ENCODE measurements at regions of chr7 and their contacts with region 1.

Region 1: DNA sequence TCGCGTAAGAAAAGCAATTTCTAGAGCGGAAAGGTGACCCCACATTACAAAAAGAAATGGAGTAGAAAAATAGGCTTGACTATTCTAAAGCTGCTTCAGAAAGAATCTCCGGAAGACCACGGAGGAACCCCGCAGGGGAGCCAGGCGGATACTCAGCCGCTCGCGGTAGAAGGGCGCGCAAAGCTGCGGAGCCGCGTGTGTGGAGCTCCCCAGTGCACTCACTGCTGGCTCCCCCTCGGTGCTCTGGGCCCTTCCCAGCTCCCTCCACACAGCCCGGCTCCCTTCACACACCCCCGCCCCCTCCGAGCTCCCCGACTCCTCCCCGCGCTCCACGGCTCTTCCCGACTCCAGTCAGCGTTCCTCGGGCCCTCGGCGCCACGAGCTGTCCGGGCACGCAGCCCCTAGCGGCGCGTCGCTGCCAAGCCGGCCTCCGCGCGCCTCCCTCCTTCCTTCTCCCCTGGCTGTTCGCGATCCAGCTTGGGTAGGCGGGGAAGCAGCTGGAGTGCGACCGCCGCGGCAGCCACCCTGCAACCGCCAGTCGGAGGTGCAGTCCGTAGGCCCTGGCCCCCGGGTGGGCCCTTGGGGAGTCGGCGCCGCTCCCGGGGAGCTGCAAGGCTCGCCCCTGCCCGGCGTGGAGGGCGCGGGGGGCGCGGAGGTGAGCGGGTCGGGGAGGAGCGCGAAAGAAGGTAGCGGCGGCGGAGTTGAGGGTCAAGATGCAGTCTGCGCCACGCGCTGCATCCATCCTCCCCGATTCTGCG is at the start of gene STEAP2:
- DNase-seq: peak; percentile 81
- ATAC-seq: peak; percentile 98
- H3K4me3 ChIP-seq: peak within 1 kb of the TSS; percentile 65 to 87 (median 83)
- H3K27ac ChIP-seq: peak within 1 kb of the TSS; percentile 94
- H3K4me1 ChIP-seq: peaks cover 30% of the 10 kb centered on the region
- H3K27me3 ChIP-seq: peaks cover 0 to 5% of the 10 kb centered on the region in 2 experiments; a peak in 1 of 5 replicates
- CTCF ChIP-seq: peak; percentile 91
- EP300 ChIP-seq: peak in 1 of 2 experiments; percentile 41; a peak in 1 of 4 replicates
- POLR2A ChIP-seq: peak; percentile 80 to 86
- RAD21 ChIP-seq: peak; percentile 79
- total RNA-seq, gene STEAP2: 3.5 and 4.3 TPM in 2 replicates

Region 2: GRCh38 chr7:90165724-90166123 is 45.8 kb before region 1 on chr7:
- CTCF ChIA-PET with region 1: no interaction called
- POLR2A ChIA-PET with region 1: interaction called, 13 read pairs
- in situ Hi-C with region 1: no loop called
- intact Hi-C with region 1: no loop called
- DNase-seq: no peak
- ATAC-seq: no peak
- H3K4me3 ChIP-seq: no peak overlapping the region
- H3K27ac ChIP-seq: no peak overlapping the region
- H3K4me1 ChIP-seq: no peaks in the 10 kb centered on the region
- H3K27me3 ChIP-seq: no peaks in the 10 kb centered on the region
- CTCF ChIP-seq: no peak
- EP300 ChIP-seq: no peak
- POLR2A ChIP-seq: no peak
- RAD21 ChIP-seq: no peak

Region 3: GRCh38 chr7:90178679-90179278 is 32.8 kb before region 1 on chr7:
- CTCF ChIA-PET with region 1: no interaction called
- POLR2A ChIA-PET with region 1: interaction called, 65 read pairs
- in situ Hi-C with region 1: no loop called
- intact Hi-C with region 1: loop called (anchors 1 kb)
- DNase-seq: peak; percentile 41
- ATAC-seq: peak; percentile 79
- H3K4me3 ChIP-seq: peak overlapping the region in 1 of 3 experiments; percentile 9; a peak in 2 of 6 replicates
- H3K27ac ChIP-seq: peak overlapping the region; percentile 29
- H3K4me1 ChIP-seq: peaks cover 38% of the 10 kb centered on the region
- H3K27me3 ChIP-seq: no peaks in the 10 kb centered on the region
- CTCF ChIP-seq: no peak
- EP300 ChIP-seq: no peak; a peak in 1 of 4 replicates
- POLR2A ChIP-seq: no peak
- RAD21 ChIP-seq: no peak

Region 4: DNA sequence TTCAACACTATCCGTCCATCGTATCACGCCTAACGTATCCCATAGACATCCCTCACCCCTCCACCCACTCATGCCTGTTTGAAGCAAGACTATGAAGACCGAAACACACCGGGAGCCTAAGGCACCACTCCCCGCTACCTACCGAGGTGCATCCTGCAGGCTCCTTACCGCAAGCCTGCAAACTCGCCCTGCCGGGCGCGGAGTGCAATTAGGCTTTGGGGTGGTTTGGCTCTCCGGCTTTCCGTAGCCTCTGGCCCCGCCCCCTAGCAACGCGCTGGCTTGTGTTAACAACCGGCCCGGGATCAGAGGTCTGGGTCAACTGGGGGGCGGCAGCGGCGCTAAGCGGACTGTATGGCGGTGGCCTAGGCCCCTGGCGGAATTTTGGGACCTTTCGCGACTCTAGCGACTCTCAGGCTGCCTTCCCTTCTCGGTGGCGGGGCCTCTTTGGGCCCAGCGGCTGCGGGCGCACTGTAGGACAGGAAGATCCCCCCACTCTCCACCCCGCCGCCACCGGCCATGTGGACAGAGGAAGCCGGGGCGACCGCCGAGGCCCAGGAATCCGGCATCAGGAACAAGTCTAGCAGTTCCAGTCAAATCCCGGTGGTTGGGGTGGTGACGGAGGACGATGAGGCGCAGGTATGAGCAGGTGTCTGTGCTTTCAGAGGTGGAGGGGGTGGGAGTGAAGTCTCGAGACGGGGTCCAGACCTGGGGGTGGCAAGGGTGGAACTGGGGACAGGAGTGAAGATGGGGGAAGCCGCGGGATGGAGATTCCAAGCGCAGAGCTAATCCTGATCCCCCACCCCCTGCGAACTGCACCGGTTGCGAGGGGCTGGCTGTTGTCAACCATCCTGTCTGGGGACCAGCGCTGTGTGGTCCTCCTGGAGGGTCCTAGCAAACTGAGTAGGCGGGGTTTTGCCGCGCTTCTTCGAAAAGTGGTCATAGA is 33.6 kb after region 1 on chr7 and contains the start of gene CFAP69:
- CTCF ChIA-PET with region 1: no interaction called
- POLR2A ChIA-PET with region 1: interaction called, 8 read pairs
- in situ Hi-C with region 1: no loop called
- intact Hi-C with region 1: loop called (anchors 1 kb)
- DNase-seq: peak; percentile 78
- ATAC-seq: peak; percentile 90
- H3K4me3 ChIP-seq: peak within 1 kb of the TSS; percentile 61 to 91 (median 76)
- H3K27ac ChIP-seq: peak within 1 kb of the TSS; percentile 51
- H3K4me1 ChIP-seq: peaks cover 29% of the 10 kb centered on the region
- H3K27me3 ChIP-seq: no peaks in the 10 kb centered on the region
- CTCF ChIP-seq: peak; percentile 53; the same call in 1 of the 2 replicates
- EP300 ChIP-seq: peak; percentile 20 to 38; a peak in 2 of 4 replicates
- POLR2A ChIP-seq: peak; percentile 33 to 82; a peak in 2 of 4 replicates
- RAD21 ChIP-seq: peak; percentile 39; the same call in 1 of the 2 replicates
- total RNA-seq, gene CFAP69: 2.7 and 4.0 TPM in 2 replicates

Region 5: DNA sequence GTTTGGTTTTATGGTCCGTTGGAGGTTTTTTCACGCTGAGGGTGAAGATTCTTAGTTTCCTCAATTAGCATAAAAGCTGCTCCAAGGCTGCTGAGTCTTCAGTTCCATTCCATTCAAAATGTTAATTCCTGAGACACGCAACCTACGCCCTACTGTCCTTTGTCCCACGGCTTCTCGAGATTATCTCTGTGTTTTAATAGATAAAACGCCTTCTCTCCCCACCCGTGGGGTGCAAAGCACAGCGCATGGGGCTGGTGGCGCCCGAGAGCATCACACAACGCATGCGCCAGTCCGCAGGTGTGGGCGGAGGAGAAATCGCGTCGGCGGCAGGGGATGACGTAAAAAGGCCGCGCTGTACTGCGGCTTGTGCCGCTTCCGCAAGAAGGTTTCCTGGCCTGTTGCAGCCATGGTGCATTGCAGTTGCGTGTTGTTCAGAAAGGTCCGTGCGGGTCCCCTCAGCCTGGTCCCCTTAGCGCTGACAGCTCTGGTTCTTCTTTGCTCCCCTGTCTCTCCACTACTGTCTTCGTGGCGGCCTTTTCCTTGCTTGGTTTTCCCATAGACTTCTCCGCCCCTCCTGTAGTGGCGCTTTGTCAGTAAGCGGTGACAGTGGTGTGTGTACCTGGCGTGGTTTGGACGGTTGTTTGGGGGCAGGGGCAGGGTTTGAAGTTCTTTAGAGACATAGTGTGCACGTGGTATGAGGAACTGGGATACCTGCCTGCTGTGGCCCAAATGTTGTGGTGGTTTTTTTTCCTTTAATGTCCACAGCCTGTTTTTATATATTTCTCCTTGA is 135.0 kb after region 1 on chr7 and contains the start of gene GTPBP10:
- CTCF ChIA-PET with region 1: no interaction called
- POLR2A ChIA-PET with region 1: interaction called, 5 read pairs
- in situ Hi-C with region 1: no loop called
- intact Hi-C with region 1: loop called (anchors 2 kb)
- DNase-seq: peak; percentile 87
- ATAC-seq: peak; percentile 91
- H3K4me3 ChIP-seq: peak within 1 kb of the TSS; percentile 82 to 97 (median 89)
- H3K27ac ChIP-seq: peak within 1 kb of the TSS; percentile 97
- H3K4me1 ChIP-seq: peaks cover 33% of the 10 kb centered on the region
- H3K27me3 ChIP-seq: no peaks in the 10 kb centered on the region; a peak in 1 of 5 replicates
- CTCF ChIP-seq: peak; percentile 87
- EP300 ChIP-seq: 0 out of 4 replicates have a peak, but pooled peaks of 1 of the 2 experiments have one; percentile 8
- POLR2A ChIP-seq: peak; percentile 97 to 98
- RAD21 ChIP-seq: peak; percentile 43
- total RNA-seq, gene GTPBP10: 38.7 and 54.6 TPM in 2 replicates